ENCODE measurements at regions of chr3 and their contacts with region 1.

Region 1: DNA sequence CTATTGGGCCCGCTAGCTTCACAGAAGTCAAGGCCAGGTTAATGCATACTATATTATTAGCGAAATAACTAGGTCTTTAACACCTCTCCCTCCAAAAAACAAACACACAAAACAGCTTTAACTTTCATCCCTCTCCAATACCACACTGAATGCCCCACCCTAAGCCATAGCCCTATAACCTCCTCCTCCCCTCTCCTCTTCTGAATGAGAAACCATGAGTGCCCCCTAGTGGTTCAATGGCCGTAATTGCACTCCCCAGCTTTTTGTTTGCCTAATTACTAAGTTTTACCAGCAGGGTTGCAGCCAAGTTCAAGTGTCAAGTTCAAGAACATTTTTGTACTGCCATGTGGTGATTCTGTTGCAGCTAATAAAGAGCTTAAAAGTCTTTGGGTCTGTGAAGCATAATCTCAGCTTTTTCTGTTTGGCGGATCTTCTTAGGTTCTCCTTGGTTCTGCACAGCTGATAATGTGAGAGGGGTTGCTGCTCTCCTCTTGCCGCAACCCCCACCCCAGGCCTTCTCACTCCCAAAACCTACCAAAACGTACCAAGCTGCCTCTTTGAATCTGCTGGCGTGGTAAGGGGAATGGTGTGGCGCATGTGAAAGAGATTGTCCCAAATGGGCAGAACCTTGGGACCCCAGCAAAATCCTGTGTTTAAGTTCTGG is 57.9 kb downstream of the RPL22L1 start:
- DNase-seq: peak in 1 of 2 donors; percentile 81
- H3K4me3 ChIP-seq: no peak overlapping the region
- H3K27ac ChIP-seq: no peak overlapping the region
- H3K4me1 ChIP-seq: peaks cover 0 to 3% of the 10 kb centered on the region in 2 donors
- H3K27me3 ChIP-seq: no peaks in the 10 kb centered on the region
- CTCF ChIP-seq: peak; percentile 79 to 93 (median 85)

Region 2: GRCh38 chr3:170307671-170308403 is 504.2 kb before region 1 on chr3:
- intact Hi-C with region 1: loop called (anchors 1 kb)
- DNase-seq: no peak
- H3K4me3 ChIP-seq: no peak overlapping the region
- H3K27ac ChIP-seq: no peak overlapping the region
- H3K4me1 ChIP-seq: no peaks in the 10 kb centered on the region
- H3K27me3 ChIP-seq: no peaks in the 10 kb centered on the region
- CTCF ChIP-seq: no peak

Region 3: GRCh38 chr3:170414202-170414663 is 397.8 kb before region 1 on chr3:
- intact Hi-C with region 1: loop called (anchors 1 kb)
- DNase-seq: no peak
- H3K4me3 ChIP-seq: no peak overlapping the region
- H3K27ac ChIP-seq: no peak overlapping the region
- H3K4me1 ChIP-seq: peaks cover 3 to 8% of the 10 kb centered on the region in 2 donors
- H3K27me3 ChIP-seq: no peaks in the 10 kb centered on the region
- CTCF ChIP-seq: peak; percentile 74 to 90 (median 87)

Region 4: GRCh38 chr3:170553788-170554757 is 258.0 kb before region 1 on chr3:
- intact Hi-C with region 1: loop called (anchors 5 kb)
- DNase-seq: no peak
- H3K4me3 ChIP-seq: no peak overlapping the region
- H3K27ac ChIP-seq: no peak overlapping the region
- H3K4me1 ChIP-seq: no peaks in the 10 kb centered on the region
- H3K27me3 ChIP-seq: no peaks in the 10 kb centered on the region
- CTCF ChIP-seq: no peak

Region 5: GRCh38 chr3:170953229-170953628 is 141.2 kb after region 1 on chr3:
- intact Hi-C with region 1: no loop called
- DNase-seq: no peak
- H3K4me3 ChIP-seq: no peak overlapping the region
- H3K27ac ChIP-seq: no peak overlapping the region
- H3K4me1 ChIP-seq: no peaks in the 10 kb centered on the region
- H3K27me3 ChIP-seq: no peaks in the 10 kb centered on the region
- CTCF ChIP-seq: no peak